ENCODE measurements at regions of chr1 and their contacts with region 1.

Region 1: GRCh38 chr1:43934101-43934985 is 742 bp downstream of the ARTN start:
- DNase-seq: no peak
- H3K4me3 ChIP-seq: no peak overlapping the region
- CTCF ChIP-seq: peak; percentile 94

Region 2: DNA sequence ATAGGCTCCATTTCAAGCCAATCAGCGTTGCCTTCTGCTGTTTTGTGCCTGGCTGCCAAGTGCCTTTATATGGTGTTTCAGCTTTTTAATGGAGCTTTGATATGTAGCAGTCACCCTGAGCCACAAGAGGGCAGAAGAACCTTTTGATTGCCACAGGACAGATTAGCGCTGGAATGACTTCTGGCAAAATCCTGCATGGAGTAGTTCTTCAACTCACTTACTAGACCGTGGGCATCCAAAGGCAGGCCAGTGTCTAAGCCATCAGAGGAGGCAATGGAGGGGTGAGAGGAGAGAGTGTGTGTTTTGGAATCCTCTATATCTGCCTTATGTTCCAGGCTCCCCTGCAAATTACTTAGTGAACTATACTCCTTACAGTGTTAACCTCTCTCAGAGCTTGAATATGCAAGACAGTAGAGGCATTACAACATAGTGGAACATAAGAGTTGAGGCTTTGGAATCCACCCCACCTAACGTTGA is 170.8 kb before region 1 on chr1:
- CTCF ChIA-PET with region 1: interaction called, 1,004 read pairs
- POLR2A ChIA-PET with region 1: interaction called, 13 read pairs
- DNase-seq: peak; percentile 73
- H3K4me3 ChIP-seq: no peak overlapping the region
- CTCF ChIP-seq: peak; percentile 79

Region 3: GRCh38 chr1:43818691-43819090 is 115.7 kb before region 1 on chr1:
- CTCF ChIA-PET with region 1: interaction called, 12 read pairs
- POLR2A ChIA-PET with region 1: no interaction called
- DNase-seq: no peak
- H3K4me3 ChIP-seq: no peak overlapping the region
- CTCF ChIP-seq: no peak

Region 4: DNA sequence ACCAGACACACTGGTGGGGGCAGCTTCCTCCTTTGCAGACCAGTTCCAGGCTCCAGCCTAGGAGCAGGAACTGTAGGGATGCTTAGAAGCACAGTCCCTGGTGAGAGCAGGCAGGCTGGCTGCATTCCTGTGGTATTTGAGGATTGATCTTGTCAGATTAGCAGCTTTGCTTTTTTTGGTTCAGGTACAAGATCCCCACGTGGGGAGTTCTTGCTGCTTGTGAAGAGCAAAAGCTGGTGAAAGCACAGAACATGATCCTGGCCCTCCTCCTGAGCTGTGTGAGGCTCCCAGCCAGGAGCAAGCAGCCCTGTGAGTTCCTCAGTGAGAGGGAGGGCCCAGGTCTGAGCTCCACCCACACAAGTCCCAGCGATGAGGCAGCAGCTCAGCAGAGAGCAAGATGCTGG is 76.0 kb before region 1 on chr1:
- CTCF ChIA-PET with region 1: interaction called, 20 read pairs
- POLR2A ChIA-PET with region 1: no interaction called
- DNase-seq: peak; percentile 99
- H3K4me3 ChIP-seq: no peak overlapping the region
- CTCF ChIP-seq: no peak

Region 5: GRCh38 chr1:43912607-43913006 is 21.7 kb before region 1 on chr1:
- CTCF ChIA-PET with region 1: interaction called, 64 read pairs
- POLR2A ChIA-PET with region 1: interaction called, 3 read pairs
- DNase-seq: peak; percentile 12
- H3K4me3 ChIP-seq: no peak overlapping the region
- CTCF ChIP-seq: no peak

Region 6: GRCh38 chr1:43974443-43975248 is 40.3 kb after region 1 on chr1 and contains the start of gene ATP6V0B:
- CTCF ChIA-PET with region 1: interaction called, 17 read pairs
- POLR2A ChIA-PET with region 1: no interaction called
- DNase-seq: peak; percentile 28
- H3K4me3 ChIP-seq: peak within 1 kb of the TSS; percentile 85
- CTCF ChIP-seq: peak; percentile 36